Heart left ventricle (tissue), 16 donors: ENCODE measurements at regions of chr9 and their contacts with region 1.

Region 1: GRCh38 chr9:37582548-37583157 is 6.5 kb upstream of the FBXO10 start:
- DNase-seq: no peak
- ATAC-seq: peak in 1 of 4 donors; percentile 46
- H3K4me3 ChIP-seq: no peak overlapping the region
- H3K27ac ChIP-seq: peak overlapping the region in 1 of 12 donors; percentile 71
- H3K4me1 ChIP-seq: peaks cover 0 to 4% (median 0%) of the 10 kb centered on the region in 12 donors
- H3K27me3 ChIP-seq: no peaks in the 10 kb centered on the region
- CTCF ChIP-seq: peak; percentile 59 to 85 (median 68)
- POLR2A ChIP-seq: no peak

Region 2: DNA sequence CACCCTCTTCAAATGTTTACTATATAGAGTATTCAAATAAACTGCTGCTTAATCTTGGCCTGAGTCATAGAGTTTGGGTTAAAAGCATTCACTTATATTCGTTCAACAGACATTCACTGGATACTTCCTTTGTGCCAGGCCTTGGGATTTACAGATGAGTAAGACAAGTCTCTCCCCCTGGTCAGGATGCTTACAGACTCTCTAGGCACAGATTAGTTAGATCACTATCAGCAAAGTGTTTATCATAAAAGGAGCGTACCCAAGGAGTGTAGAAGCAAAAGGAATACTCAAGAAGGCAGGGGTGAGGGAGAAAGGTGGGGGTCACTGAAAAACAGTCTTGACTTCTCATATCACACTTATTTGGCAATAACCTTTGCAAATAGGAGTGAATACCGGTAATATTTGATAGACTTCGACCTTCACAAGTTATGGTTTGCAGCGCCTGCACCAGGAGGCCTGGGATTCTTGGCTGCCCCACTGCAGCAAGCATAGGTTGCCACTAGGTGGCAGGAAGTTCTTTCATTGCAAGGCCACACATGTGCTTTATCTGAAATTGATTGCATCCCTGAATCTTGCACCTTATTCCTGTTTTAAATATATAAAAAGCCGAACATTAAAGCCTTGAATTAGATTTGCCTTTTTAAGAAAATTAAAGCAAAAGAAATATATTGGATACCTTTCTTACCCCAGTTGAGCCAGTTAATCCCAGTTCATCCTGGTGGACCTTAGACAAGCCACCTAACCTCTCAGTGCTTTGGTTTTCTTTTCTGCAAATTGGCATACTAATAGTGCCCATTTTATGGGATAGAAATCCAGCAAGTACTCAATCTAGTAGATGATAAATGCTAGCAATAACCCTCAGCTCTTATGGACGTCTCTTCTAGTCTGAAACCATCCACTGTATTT is 164.4 kb after region 1 on chr9:
- intact Hi-C with region 1: loop called in 2 of 10 experiments (anchors 5 to 10 kb)
- DNase-seq: peak in 2 of 5 donors; percentile 39 to 49
- ATAC-seq: peak in 3 of 4 donors; percentile 77 to 88 (median 78)
- H3K4me3 ChIP-seq: no peak overlapping the region
- H3K27ac ChIP-seq: no peak overlapping the region
- H3K4me1 ChIP-seq: no peaks in the 10 kb centered on the region
- H3K27me3 ChIP-seq: no peaks in the 10 kb centered on the region
- CTCF ChIP-seq: peak; percentile 76 to 94 (median 84)
- POLR2A ChIP-seq: no peak

Region 3: GRCh38 chr9:37776328-37776727 is 193.7 kb after region 1 on chr9:
- intact Hi-C with region 1: loop called in 3 of 10 experiments (anchors 10 kb)
- DNase-seq: no peak
- ATAC-seq: no peak
- H3K4me3 ChIP-seq: no peak overlapping the region
- H3K27ac ChIP-seq: no peak overlapping the region
- H3K4me1 ChIP-seq: no peaks in the 10 kb centered on the region
- H3K27me3 ChIP-seq: no peaks in the 10 kb centered on the region
- CTCF ChIP-seq: no peak
- POLR2A ChIP-seq: no peak

Region 4: DNA sequence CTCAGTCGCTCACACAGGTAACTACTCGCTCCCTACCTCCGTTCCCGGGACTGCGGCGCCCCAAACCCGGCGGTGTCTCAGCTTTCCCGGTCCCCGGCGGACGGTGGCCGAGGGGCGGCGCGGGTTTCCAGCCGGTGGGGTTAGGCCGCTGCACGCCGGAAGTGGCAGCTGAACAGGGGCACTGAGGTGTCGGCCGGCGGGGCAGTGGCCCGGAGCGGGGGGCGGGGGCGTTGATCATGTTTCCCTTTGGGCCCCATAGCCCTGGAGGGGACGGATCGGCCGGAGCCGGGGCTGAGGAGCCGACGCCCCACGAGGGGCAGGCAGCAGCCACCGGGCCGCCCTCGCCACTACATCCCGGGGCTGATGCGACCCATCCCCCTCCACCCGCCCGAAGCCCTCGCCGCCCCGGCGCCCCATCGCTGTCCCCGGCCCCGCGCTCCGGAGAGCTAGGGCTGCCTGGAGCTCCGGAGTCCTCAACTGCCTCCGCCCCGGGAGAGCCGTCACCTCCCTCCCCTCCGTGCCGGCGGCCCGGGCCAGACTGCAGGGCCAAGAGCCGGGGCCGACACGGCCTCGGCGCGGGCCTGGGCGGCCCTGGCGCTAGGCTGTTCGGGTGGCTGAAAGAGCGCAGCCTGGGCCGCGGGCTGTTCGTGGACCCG is 218.1 kb after region 1 on chr9 and contains the start of gene DCAF10:
- intact Hi-C with region 1: loop called in 1 of 10 experiments (anchors 10 kb)
- DNase-seq: peak; percentile 87 to 94 (median 88)
- ATAC-seq: peak; percentile 79 to 97 (median 96)
- H3K4me3 ChIP-seq: peak within 1 kb of the TSS; percentile 77 to 100 (median 95)
- H3K27ac ChIP-seq: peak within 1 kb of the TSS; percentile 28 to 93 (median 88)
- H3K4me1 ChIP-seq: peaks cover 0 to 33% (median 26%) of the 10 kb centered on the region in 12 donors
- H3K27me3 ChIP-seq: no peaks in the 10 kb centered on the region
- CTCF ChIP-seq: no peak
- POLR2A ChIP-seq: peak in 1 of 2 donors; percentile 73
- total RNA-seq, gene DCAF10: 13.3 to 24.3 (median 20.1) TPM